ENCODE measurements at regions of chr13 and their contacts with region 1.

Region 1: GRCh38 chr13:30114571-30115256 is 192.6 kb downstream of the KATNAL1 start:
- DNase-seq: peak; percentile 96
- ATAC-seq: peak; percentile 91
- H3K4me3 Mint-ChIP-seq: peak overlapping the region; percentile 72
- H3K27ac Mint-ChIP-seq: no peak overlapping the region
- H3K4me1 Mint-ChIP-seq: peaks cover 23% of the 10 kb centered on the region
- H3K27me3 Mint-ChIP-seq: no peaks in the 10 kb centered on the region
- CTCF ChIP-seq: peak; percentile 97

Region 2: GRCh38 chr13:29771247-29771646 is 343.5 kb before region 1 on chr13:
- CTCF ChIA-PET with region 1: interaction called, 236 read pairs
- POLR2A ChIA-PET with region 1: interaction called, 3 read pairs
- intact Hi-C with region 1: loop called (anchors 5 kb)
- DNase-seq: no peak
- ATAC-seq: peak; percentile 39
- H3K4me3 Mint-ChIP-seq: no peak overlapping the region
- H3K27ac Mint-ChIP-seq: no peak overlapping the region
- H3K4me1 Mint-ChIP-seq: no peaks in the 10 kb centered on the region
- H3K27me3 Mint-ChIP-seq: no peaks in the 10 kb centered on the region
- CTCF ChIP-seq: peak; percentile 74

Region 3: DNA sequence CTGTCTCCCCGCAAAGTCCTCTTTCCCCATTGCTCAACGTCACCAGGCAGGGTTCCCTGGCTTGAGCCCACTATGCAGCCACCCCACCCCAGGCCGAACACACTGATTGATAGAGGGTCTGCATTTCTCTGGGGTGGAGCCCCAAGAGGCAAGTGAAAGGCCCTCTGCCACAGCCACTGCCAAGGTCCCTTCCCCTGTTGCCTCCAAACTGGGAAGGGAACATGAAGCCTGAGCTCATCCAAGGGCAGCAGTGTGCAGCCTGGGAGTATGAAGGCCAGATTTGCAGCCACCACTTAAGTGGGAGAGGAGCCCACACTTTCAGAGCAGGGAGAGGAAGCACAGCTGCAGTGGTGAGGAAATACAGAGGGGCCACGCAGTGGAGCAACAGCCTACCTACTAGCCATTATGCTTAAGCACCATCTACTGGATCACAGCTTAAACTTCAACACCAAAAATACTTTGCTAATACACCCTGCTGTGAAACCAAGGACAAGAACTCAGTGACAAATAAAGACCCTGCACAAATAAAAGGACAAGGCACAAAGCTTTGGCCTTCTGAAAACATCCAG is 312.9 kb before region 1 on chr13:
- CTCF ChIA-PET with region 1: interaction called, 11 read pairs
- POLR2A ChIA-PET with region 1: no interaction called
- intact Hi-C with region 1: no loop called
- DNase-seq: no peak
- ATAC-seq: no peak
- H3K4me3 Mint-ChIP-seq: no peak overlapping the region
- H3K27ac Mint-ChIP-seq: no peak overlapping the region
- H3K4me1 Mint-ChIP-seq: peaks cover 26% of the 10 kb centered on the region
- H3K27me3 Mint-ChIP-seq: no peaks in the 10 kb centered on the region
- CTCF ChIP-seq: no peak

Region 4: DNA sequence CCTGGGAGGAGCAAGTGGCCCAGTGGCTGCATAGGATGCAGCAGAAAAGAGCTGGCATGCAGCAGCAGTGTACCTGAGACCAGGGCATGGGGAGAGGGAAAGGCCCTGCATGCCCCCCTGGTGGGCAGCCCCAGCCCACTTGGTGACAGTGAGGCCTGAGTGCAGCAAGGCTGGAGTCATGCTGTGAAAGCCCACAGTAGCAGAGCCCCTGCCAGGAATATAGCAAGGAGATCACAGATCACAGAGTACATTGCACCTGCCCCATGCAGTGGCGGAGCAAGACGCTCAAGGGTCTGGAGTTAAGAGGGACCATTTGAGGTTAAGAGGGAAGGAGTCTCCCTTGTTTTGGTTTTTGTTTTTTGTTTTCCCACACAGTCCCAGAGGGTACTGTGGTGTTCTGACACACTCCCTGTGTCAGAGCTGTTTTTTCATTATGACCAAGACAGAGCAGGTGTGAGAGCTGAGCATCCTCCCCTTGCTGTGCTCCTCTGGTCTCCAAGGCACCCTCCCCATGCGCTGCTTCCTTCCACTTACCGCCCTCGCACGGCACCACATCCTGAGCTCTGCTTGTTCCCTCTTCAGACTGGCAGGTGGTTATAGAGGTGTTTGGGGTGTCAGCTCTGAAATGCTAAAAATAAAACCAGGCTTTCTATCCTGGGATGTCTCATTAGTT is 179.3 kb before region 1 on chr13:
- CTCF ChIA-PET with region 1: interaction called, 17 read pairs
- POLR2A ChIA-PET with region 1: interaction called, 3 read pairs
- intact Hi-C with region 1: loop called (anchors 10 kb)
- DNase-seq: peak; percentile 93
- ATAC-seq: peak; percentile 95
- H3K4me3 Mint-ChIP-seq: peak overlapping the region; percentile 67
- H3K27ac Mint-ChIP-seq: peak overlapping the region; percentile 81
- H3K4me1 Mint-ChIP-seq: peaks cover 40% of the 10 kb centered on the region
- H3K27me3 Mint-ChIP-seq: no peaks in the 10 kb centered on the region
- CTCF ChIP-seq: no peak

Region 5: DNA sequence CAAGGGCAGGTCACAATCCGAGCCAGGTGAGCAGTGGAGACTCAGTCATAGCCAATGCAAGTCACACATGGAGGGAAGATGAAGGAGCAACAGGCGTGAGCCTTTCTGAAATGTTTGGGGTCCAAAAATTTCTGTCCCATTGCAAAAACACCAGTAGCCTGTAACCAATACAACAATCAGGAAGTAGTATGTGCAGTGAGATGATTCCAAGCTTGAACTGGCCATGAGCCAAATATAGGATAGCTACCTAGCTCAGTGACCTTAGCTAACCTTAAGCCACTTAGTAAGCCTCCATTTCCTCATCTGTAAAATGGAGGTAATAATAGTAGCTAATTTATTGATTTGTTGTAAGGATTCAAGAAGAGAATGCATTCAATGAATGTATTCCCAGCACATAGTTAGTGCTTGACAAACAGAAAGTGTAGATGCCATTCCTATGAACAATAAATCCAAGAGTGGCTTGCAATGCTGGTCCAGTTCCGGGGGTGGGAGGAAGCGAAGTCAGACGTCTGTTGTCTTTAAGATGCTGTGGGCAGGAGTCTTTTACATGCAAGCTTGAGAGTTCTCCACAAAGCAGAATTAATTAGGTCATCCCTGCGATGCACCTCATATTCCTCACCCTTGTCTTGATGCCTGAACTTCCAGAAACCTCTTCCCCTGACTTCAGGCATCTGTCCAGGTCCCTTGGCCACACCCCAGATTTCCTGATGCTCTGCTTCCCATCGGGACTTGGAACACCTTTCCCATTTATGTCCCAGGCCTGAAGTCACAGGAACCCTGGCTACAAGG is 68.6 kb before region 1 on chr13:
- CTCF ChIA-PET with region 1: interaction called, 10 read pairs
- POLR2A ChIA-PET with region 1: no interaction called
- intact Hi-C with region 1: no loop called
- DNase-seq: no peak
- ATAC-seq: no peak
- H3K4me3 Mint-ChIP-seq: no peak overlapping the region
- H3K27ac Mint-ChIP-seq: no peak overlapping the region
- H3K4me1 Mint-ChIP-seq: peaks cover 17% of the 10 kb centered on the region
- H3K27me3 Mint-ChIP-seq: no peaks in the 10 kb centered on the region
- CTCF ChIP-seq: no peak

Region 6: GRCh38 chr13:30125422-30126073 is 10.8 kb after region 1 on chr13:
- CTCF ChIA-PET with region 1: interaction called, 71 read pairs
- POLR2A ChIA-PET with region 1: no interaction called
- intact Hi-C with region 1: no loop called
- DNase-seq: no peak
- ATAC-seq: no peak
- H3K4me3 Mint-ChIP-seq: no peak overlapping the region
- H3K27ac Mint-ChIP-seq: no peak overlapping the region
- H3K4me1 Mint-ChIP-seq: peaks cover 19% of the 10 kb centered on the region
- H3K27me3 Mint-ChIP-seq: no peaks in the 10 kb centered on the region
- CTCF ChIP-seq: no peak

Region 7: GRCh38 chr13:30158774-30159445 is 44.2 kb after region 1 on chr13:
- CTCF ChIA-PET with region 1: interaction called, 11 read pairs
- POLR2A ChIA-PET with region 1: no interaction called
- intact Hi-C with region 1: no loop called
- DNase-seq: peak; percentile 16
- ATAC-seq: peak; percentile 37
- H3K4me3 Mint-ChIP-seq: no peak overlapping the region
- H3K27ac Mint-ChIP-seq: peak overlapping the region; percentile 60
- H3K4me1 Mint-ChIP-seq: peaks cover 34% of the 10 kb centered on the region
- H3K27me3 Mint-ChIP-seq: no peaks in the 10 kb centered on the region
- CTCF ChIP-seq: peak; percentile 29

Measured in activated CD8-positive, alpha-beta T cell treated with anti-CD3 and anti-CD28 coated beads for 36 hours (primary cell).